Calu3 (cell line): ENCODE measurements at regions of chr2 and their contacts with region 1.

Region 1: GRCh38 chr2:40975151-40975550 is 523.3 kb upstream of the SLC8A1 start:
- DNase-seq: no peak
- H3K4me3 Mint-ChIP-seq: no peak overlapping the region
- H3K27ac Mint-ChIP-seq: no peak overlapping the region
- H3K4me1 Mint-ChIP-seq: no peaks in the 10 kb centered on the region
- H3K27me3 Mint-ChIP-seq: no peaks in the 10 kb centered on the region
- CTCF ChIP-seq: no peak

Region 2: GRCh38 chr2:41169744-41170143 is 194.6 kb after region 1 on chr2:
- CTCF ChIA-PET with region 1: no interaction called
- intact Hi-C with region 1: loop called (anchors 5 kb)
- DNase-seq: no peak
- H3K4me3 Mint-ChIP-seq: no peak overlapping the region
- H3K27ac Mint-ChIP-seq: no peak overlapping the region
- H3K4me1 Mint-ChIP-seq: peaks cover 22% of the 10 kb centered on the region
- H3K27me3 Mint-ChIP-seq: no peaks in the 10 kb centered on the region
- CTCF ChIP-seq: no peak